Activated naive CD4-positive, alpha-beta T cell treated with anti-CD3 and anti-CD28 coated beads, Interleukin-2, amount 10 ng/mL, durations not matched to agents 7 days and 5 days (primary cell): ENCODE measurements at regions of chr3 and their contacts with region 1.

Region 1: GRCh38 chr3:195863121-195864006 is 45.0 kb downstream of the TNK2 start:
- DNase-seq: peak; percentile 73
- H3K4me3 Mint-ChIP-seq: no peak overlapping the region
- H3K27ac Mint-ChIP-seq: peak overlapping the region; percentile 60
- H3K4me1 Mint-ChIP-seq: peaks cover 5% of the 10 kb centered on the region
- H3K27me3 Mint-ChIP-seq: peaks cover 15% of the 10 kb centered on the region

Region 2: DNA sequence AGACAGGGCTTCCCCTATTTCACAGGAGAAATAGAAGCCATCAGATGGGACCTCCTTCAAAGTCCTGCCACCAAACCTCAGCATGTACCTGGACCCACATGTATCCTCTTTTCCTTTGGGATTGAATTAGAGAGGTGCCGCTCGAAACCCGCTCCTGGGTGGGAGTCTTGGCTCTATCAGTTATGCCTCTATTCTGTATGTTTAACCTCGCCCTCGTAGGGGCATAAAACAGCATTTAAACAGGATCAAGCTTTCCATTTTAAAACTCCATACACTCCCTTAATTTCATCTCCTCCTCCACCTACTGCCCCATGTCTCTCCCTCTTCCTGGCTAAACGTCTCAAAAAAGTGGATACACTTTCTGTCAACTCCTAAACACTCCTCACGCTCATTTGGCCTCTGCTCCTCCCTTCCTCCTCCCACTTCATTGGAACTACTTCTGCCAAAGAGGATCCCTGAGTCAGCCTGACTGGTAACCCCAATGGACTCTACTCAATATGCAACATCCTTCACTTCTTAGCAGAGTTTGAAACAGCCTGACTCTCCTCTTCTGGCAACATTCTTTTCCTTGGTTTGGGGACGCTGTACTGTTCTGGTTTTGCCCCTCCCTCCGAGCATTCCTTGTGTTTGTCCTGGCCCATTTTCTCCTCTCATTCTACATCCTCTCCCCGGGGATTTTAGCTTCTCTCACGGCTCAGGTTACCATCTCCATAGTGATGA is 165.6 kb before region 1 on chr3:
- CTCF ChIA-PET with region 1: no interaction called
- DNase-seq: no peak
- H3K4me3 Mint-ChIP-seq: no peak overlapping the region
- H3K27ac Mint-ChIP-seq: no peak overlapping the region
- H3K4me1 Mint-ChIP-seq: no peaks in the 10 kb centered on the region
- H3K27me3 Mint-ChIP-seq: no peaks in the 10 kb centered on the region

Region 3: GRCh38 chr3:195803289-195803950 is 59.9 kb before region 1 on chr3:
- CTCF ChIA-PET with region 1: no interaction called
- DNase-seq: no peak
- H3K4me3 Mint-ChIP-seq: peak overlapping the region; percentile 4
- H3K27ac Mint-ChIP-seq: peak overlapping the region; percentile 91
- H3K4me1 Mint-ChIP-seq: peaks cover 66% of the 10 kb centered on the region
- H3K27me3 Mint-ChIP-seq: peaks cover 23% of the 10 kb centered on the region

Region 4: DNA sequence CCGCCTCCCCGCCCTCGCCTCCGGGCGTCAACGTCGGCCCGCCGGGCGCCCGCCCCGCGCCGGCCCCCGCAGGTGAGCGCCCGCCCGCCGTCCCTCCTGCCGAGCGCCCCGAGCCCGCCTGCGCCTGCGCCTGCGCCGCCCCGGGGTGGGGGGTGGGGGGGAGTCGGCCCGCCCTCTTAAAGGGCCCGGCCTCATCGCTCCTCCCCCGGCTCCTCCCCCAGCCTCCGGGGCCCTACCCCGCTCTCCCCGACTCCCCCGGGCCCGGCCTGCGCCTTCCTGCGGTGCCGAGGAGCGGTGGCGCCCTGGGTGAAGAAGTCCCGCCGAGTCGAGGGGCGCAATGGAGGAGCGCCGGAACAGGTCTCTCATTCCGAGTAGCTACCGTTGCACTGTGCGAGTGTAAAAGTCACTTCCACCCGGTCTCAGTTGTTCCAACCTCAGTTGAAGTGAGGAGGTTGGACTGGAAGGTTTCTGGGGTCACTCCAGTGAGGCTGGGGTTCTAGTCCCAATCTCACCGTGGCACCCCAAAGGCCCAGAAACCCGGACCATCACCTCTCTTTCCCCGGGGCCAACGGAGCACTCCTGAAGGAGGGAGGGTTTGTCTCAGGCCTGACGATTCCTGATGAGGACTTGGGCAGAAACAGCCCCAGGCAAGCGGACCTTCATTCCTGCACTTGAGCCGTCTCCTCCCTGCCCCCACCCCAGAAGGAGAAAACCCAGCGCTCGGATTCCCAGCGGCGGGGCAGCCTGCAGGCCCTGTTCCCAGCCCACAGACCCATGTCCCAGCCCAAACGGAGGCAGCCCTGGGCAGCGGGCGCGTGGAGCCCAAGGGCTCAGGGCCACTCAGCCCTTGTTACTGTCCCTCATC is 46.5 kb after region 1 on chr3:
- CTCF ChIA-PET with region 1: interaction called, 58 read pairs
- DNase-seq: peak; percentile 92
- H3K4me3 Mint-ChIP-seq: peak overlapping the region; percentile 73
- H3K27ac Mint-ChIP-seq: peak overlapping the region; percentile 86
- H3K4me1 Mint-ChIP-seq: peaks cover 43% of the 10 kb centered on the region
- H3K27me3 Mint-ChIP-seq: peaks cover 9% of the 10 kb centered on the region

Region 5: GRCh38 chr3:196837819-196838420 is 974.6 kb after region 1 on chr3:
- CTCF ChIA-PET with region 1: no interaction called
- DNase-seq: peak; percentile 84
- H3K4me3 Mint-ChIP-seq: no peak overlapping the region
- H3K27ac Mint-ChIP-seq: no peak overlapping the region
- H3K4me1 Mint-ChIP-seq: peaks cover 7% of the 10 kb centered on the region
- H3K27me3 Mint-ChIP-seq: no peaks in the 10 kb centered on the region